Endothelial cell of umbilical vein (primary cell): ENCODE measurements at regions of chr4 and their contacts with region 1.

Region 1: DNA sequence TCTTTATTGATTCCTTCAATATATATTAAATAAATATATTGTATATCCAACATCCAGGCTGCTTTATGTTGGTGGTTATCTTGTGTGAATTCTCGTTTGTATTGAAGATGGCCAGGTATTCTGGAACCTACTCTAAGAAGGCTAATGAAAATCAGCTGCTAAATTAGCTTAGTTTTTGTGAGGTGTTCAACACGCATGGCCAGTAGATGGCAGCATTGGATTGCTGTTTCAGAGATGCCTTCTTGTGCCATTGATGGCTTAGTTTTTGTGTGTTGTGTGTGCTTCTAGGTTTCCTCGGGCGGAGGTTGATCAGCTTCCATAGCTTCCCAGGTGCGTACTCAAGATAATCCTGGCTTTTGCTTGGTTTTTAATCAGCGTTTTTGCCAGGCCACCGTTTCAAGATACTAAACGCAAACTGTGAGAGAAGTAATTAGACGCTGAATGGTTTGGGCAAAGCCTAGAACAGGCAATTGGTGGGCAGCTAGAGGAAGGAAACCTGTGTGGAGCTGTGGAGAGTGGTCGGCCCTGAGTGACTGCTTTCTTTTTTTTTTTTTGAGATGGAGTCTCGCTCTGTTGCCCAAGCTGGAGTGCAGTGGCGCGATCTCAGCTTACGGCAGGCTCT is 15.1 kb downstream of the NOCT start:
- DNase-seq: peak; percentile 84
- H3K4me3 ChIP-seq: no peak overlapping the region
- H3K27ac ChIP-seq: no peak overlapping the region
- H3K4me1 ChIP-seq: no peaks in the 10 kb centered on the region
- H3K27me3 ChIP-seq: no peaks in the 10 kb centered on the region
- CTCF ChIP-seq: peak; percentile 74 to 76
- POLR2A ChIP-seq: no peak

Region 2: DNA sequence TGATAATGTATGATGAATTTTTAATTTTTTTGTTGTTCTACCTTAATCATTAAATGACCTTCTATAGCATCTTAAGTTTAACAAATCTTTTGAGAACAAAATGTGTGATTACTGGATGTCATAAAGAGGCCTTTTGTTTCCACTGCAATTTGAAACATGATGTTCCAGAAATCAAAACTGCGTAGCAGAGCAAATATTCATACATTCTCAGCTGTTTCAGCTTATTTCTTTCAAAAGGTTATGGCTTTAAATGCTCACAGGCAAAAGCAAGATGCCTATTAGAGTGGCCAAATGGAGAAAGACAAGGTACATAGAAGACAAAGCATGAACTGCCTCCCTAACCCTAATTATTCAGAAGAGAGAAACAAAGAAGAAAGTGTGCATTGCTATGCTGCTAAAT is 555.6 kb before region 1 on chr4:
- CTCF ChIA-PET with region 1: no interaction called
- POLR2A ChIA-PET with region 1: no interaction called
- dilution Hi-C with region 1: no loop called
- intact Hi-C with region 1: no loop called
- DNase-seq: no peak
- H3K4me3 ChIP-seq: no peak overlapping the region
- H3K27ac ChIP-seq: no peak overlapping the region
- H3K4me1 ChIP-seq: no peaks in the 10 kb centered on the region
- H3K27me3 ChIP-seq: peaks cover 0 to 1% of the 10 kb centered on the region in 2 experiments
- CTCF ChIP-seq: no peak
- POLR2A ChIP-seq: no peak

Region 3: GRCh38 chr4:138964716-138965426 is 65.9 kb before region 1 on chr4:
- CTCF ChIA-PET with region 1: no interaction called
- POLR2A ChIA-PET with region 1: no interaction called
- dilution Hi-C with region 1: no loop called
- intact Hi-C with region 1: no loop called
- DNase-seq: no peak
- H3K4me3 ChIP-seq: no peak overlapping the region
- H3K27ac ChIP-seq: no peak overlapping the region
- H3K4me1 ChIP-seq: no peaks in the 10 kb centered on the region
- H3K27me3 ChIP-seq: no peaks in the 10 kb centered on the region
- CTCF ChIP-seq: no peak
- POLR2A ChIP-seq: no peak

Region 4: GRCh38 chr4:139076016-139076744 is 45.5 kb after region 1 on chr4:
- CTCF ChIA-PET with region 1: interaction called, 33 read pairs
- POLR2A ChIA-PET with region 1: no interaction called
- dilution Hi-C with region 1: no loop called
- intact Hi-C with region 1: no loop called
- DNase-seq: no peak
- H3K4me3 ChIP-seq: no peak overlapping the region
- H3K27ac ChIP-seq: no peak overlapping the region
- H3K4me1 ChIP-seq: no peaks in the 10 kb centered on the region
- H3K27me3 ChIP-seq: no peaks in the 10 kb centered on the region
- CTCF ChIP-seq: no peak
- POLR2A ChIP-seq: no peak

Region 5: DNA sequence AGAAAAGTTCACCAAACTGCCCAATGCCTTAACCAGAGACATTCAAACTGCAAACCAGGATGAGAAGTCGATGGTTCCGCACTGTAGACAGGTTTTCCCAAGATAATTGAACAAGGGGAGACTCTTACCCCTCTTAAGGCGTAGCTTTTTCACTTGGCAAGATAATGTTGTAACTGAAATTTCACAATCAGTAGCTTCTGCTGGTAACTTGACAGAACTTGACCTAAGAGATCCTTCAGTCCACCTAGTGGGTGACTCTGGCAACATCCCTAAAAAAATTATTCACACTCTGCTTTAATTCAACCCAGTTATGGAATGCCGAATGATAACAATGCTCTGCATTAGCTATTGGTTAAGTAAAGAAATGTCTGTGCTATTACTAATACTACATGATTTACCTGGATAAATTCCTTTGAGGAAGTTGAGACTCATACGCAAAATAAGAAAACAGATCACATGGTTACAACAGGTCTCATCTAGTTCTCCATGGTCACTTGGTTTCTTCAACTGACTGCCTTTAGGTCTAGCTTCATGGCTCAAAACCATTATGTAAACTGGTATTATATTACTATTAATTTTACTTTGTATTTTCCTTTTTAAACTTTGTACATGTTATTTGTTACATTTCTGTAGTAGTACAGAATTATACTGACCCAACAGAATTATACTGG is 137.2 kb after region 1 on chr4:
- CTCF ChIA-PET with region 1: interaction called, 27 read pairs
- POLR2A ChIA-PET with region 1: no interaction called
- dilution Hi-C with region 1: no loop called
- intact Hi-C with region 1: loop called (anchors 2 kb)
- DNase-seq: peak; percentile 36
- H3K4me3 ChIP-seq: no peak overlapping the region
- H3K27ac ChIP-seq: no peak overlapping the region
- H3K4me1 ChIP-seq: peaks cover 9% of the 10 kb centered on the region
- H3K27me3 ChIP-seq: no peaks in the 10 kb centered on the region
- CTCF ChIP-seq: peak in 1 of 2 donors; percentile 28
- POLR2A ChIP-seq: no peak

Region 6: GRCh38 chr4:139200506-139200905 is 169.8 kb after region 1 on chr4:
- CTCF ChIA-PET with region 1: no interaction called
- POLR2A ChIA-PET with region 1: no interaction called
- dilution Hi-C with region 1: no loop called
- intact Hi-C with region 1: no loop called
- DNase-seq: no peak
- H3K4me3 ChIP-seq: no peak overlapping the region
- H3K27ac ChIP-seq: no peak overlapping the region
- H3K4me1 ChIP-seq: no peaks in the 10 kb centered on the region
- H3K27me3 ChIP-seq: peaks cover 0 to 1% of the 10 kb centered on the region in 2 experiments
- CTCF ChIP-seq: no peak
- POLR2A ChIP-seq: no peak

Region 7: DNA sequence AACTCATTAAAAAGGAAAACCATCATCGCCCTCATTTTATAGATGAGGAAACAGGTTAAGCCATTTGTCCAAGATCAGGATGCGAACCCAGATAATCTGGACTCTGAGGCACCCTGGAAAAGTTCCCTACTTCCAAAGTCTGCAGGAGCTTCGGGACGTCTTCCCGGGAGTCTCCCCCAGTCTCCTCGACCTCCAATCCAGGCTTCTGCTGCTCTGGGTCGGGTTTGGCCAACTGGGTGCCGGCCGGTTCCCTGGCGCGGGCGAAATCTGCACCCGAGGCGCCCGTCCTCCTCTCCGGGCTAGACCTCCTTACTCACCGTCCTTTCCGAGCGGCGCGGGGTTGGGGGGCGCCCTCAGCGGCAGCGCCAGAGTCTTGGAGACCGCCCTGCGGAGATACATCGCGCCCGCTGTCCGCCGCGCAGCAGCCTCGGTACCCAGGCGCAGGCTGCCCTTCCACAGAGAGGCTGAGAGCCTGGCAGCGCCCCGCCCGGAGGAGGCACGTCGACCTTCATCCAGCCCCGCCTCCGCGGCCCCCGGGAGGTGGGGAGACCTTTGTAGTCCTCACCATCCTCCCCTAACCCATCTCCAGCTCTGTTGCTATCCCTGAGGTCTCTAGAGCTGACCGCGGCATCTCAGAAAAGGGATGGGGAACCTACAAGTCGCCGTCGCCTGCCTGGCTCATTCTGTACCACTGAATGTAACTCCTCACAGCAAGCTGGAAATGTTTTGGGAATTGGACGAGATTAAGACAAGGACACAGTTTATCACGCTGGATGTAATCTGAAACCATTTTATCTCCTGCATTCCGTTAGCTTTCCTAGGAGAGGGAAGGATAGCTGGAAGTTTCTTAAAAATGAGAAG is 249.3 kb after region 1 on chr4 and contains the start of gene MGARP:
- CTCF ChIA-PET with region 1: interaction called, 36 read pairs
- POLR2A ChIA-PET with region 1: no interaction called
- dilution Hi-C with region 1: no loop called
- intact Hi-C with region 1: no loop called
- DNase-seq: peak; percentile 73
- H3K4me3 ChIP-seq: peak within 1 kb of the TSS; percentile 59 to 80 (median 68)
- H3K27ac ChIP-seq: no peak within 1 kb of the TSS
- H3K4me1 ChIP-seq: peaks cover 26% of the 10 kb centered on the region
- H3K27me3 ChIP-seq: no peaks in the 10 kb centered on the region
- CTCF ChIP-seq: peak in 1 of 2 donors; percentile 2
- POLR2A ChIP-seq: peak; percentile 53
- total RNA-seq, gene MGARP: 16.2 and 25.9 TPM in 2 replicates

Region 8: GRCh38 chr4:139501927-139502899 is 471.5 kb after region 1 on chr4:
- CTCF ChIA-PET with region 1: interaction called, 17 read pairs
- POLR2A ChIA-PET with region 1: no interaction called
- dilution Hi-C with region 1: no loop called
- intact Hi-C with region 1: no loop called
- DNase-seq: no peak
- H3K4me3 ChIP-seq: no peak overlapping the region
- H3K27ac ChIP-seq: no peak overlapping the region
- H3K4me1 ChIP-seq: no peaks in the 10 kb centered on the region
- H3K27me3 ChIP-seq: no peaks in the 10 kb centered on the region
- CTCF ChIP-seq: no peak
- POLR2A ChIP-seq: peak; percentile 11